Posterior vena cava (tissue), 2 donors: ENCODE measurements at regions of chrX and their contacts with region 1.

Region 1: GRCh38 chrX:110146521-110146920 is 143.6 kb downstream of the TMEM164 start:
- DNase-seq: no peak

Region 2: DNA sequence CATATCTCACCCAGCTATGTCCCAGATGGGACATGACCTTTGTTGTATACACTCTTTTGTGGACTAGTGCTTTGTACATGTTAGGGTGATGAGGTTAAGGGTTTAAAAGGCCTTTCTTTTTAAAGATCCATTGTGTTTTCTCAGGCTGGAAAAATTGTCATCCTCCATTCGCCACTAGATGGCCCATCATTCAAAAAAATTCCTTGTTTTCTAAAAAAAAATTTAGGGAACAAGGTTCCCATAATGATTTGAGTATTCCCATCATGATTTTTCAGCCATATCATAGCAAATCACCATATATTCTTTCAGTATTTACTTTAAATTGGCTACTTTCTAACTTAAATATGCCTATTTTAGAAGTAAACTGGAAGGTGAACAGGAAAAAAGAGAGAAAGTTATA is 235.5 kb before region 1 on chrX:
- intact Hi-C with region 1: loop called in 1 of 2 experiments (anchors 10 kb)
- DNase-seq: no peak